Gastrocnemius medialis (tissue), 4 donors: ENCODE measurements at regions of chr3 and their contacts with region 1.

Region 1: DNA sequence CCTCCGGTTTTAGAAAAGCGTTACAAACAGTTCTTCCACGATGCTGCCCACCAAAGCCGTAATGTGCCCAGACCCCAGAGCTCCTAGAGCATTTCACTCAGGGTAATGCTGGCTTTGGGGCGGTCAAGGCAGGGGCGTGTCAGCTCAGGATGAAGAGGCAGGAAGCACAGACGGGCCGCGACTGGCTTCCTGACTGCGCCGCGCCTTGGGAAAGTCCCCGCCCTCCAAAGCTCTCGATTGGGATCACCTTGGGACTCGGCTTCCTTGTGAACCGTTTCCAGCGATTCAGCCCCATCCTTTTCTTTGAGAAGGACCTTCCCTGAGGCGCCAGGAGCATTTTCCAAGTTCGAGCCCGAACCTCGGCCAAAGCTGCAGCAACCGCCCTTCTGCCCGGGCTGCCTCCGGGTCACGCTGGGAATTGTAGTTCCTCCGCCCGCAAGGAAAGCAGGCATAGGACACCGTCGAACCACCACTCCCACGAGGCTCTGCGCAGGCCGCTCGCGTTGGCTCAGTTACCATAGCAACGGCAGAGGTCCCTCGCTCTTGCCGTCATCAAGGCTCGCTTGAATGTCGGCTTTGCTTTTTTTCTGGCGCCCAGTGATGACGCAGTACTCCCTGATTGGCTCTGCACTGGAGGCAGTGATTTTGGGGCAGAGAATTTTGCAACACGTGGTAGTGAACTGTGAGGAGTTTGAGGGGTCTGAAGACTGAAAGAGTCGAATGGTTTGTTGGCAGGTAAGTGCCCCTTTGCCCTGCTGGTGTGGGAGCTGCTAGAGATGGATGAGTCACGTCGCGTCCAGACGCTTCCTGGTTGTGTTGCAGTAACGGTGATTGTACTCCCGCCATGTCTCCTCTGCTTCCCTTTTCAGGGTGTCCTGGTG is at the starts of genes CCDC191 and QTRT2:
- DNase-seq: peak; percentile 99
- ATAC-seq: peak; percentile 97 to 98
- H3K4me3 ChIP-seq: peak within 1 kb of the TSS; percentile 76 to 87 (median 82)
- H3K27ac ChIP-seq: peak within 1 kb of the TSS; percentile 79 to 83 (median 82)
- H3K4me1 ChIP-seq: peaks cover 10 to 19% of the 10 kb centered on the region in 2 donors
- H3K27me3 ChIP-seq: no peaks in the 10 kb centered on the region
- CTCF ChIP-seq: no peak
- POLR2A ChIP-seq: no peak
- total RNA-seq, gene CCDC191: 0.29 to 0.82 (median 0.42) TPM
- total RNA-seq, gene QTRT2: 3.3 to 7.1 (median 6.9) TPM

Region 2: GRCh38 chr3:112561731-112562688 is 1494.4 kb before region 1 on chr3 and contains the starts of genes ATG3 and SLC35A5:
- in situ Hi-C with region 1: loop called in 1 of 4 experiments (anchors 25 kb)
- intact Hi-C with region 1: no loop called
- DNase-seq: peak; percentile 96 to 98
- ATAC-seq: peak; percentile 95
- H3K4me3 ChIP-seq: peak within 1 kb of the TSS; percentile 71 to 93 (median 88)
- H3K27ac ChIP-seq: peak within 1 kb of the TSS; percentile 92 to 97 (median 94)
- H3K4me1 ChIP-seq: peaks cover 25 to 36% of the 10 kb centered on the region in 2 donors
- H3K27me3 ChIP-seq: no peaks in the 10 kb centered on the region
- CTCF ChIP-seq: peak in 3 of 5 experiments; percentile 18 to 38 (median 35)
- POLR2A ChIP-seq: peak; percentile 69 to 79
- total RNA-seq, gene ATG3: 34.2 to 61.9 (median 50.7) TPM
- total RNA-seq, gene SLC35A5: 5.0 to 15.3 (median 9.5) TPM

Region 3: GRCh38 chr3:113696658-113697499 is 359.5 kb before region 1 on chr3:
- in situ Hi-C with region 1: no loop called
- intact Hi-C with region 1: loop called (anchors 2 kb)
- DNase-seq: peak; percentile 100
- ATAC-seq: peak; percentile 91 to 92
- H3K4me3 ChIP-seq: peak overlapping the region; percentile 76 to 91 (median 78)
- H3K27ac ChIP-seq: peak overlapping the region; percentile 95 to 99 (median 96)
- H3K4me1 ChIP-seq: peaks cover 48 to 51% of the 10 kb centered on the region in 2 donors
- H3K27me3 ChIP-seq: no peaks in the 10 kb centered on the region
- CTCF ChIP-seq: peak in 2 of 5 experiments; percentile 5 to 24
- POLR2A ChIP-seq: no peak

Region 4: DNA sequence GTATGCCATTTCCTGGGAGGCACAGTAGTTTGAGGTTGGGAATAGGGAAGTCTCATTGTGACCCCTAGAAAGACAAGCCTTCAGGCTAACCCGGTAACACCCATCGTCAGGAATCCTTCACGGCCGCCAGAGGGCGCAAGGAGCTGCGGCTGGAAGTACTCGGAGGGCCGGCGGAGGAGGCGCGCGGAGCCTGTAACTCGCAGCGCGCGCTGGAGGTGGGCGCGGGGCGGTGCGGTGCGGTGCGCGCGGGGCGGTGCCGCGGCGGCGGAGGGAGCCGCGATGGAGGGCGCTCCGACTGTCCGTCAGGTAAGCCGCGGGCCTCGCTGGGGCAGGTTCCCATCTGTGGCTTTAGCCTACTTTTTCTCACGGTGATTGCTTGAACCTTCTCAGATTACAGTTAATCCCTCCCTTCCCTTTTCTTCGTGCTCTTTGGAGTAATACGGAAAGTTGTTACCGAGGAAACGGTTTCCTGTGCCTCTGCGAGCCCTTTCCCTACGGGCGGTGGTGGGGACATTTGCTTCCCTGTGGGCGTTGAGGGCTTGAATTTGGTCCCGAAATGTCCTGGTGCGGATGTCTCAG is 217.7 kb before region 1 on chr3 and contains the start of gene GRAMD1C:
- in situ Hi-C with region 1: loop called in 1 of 4 experiments (anchors 10 kb)
- intact Hi-C with region 1: loop called (anchors 2 kb)
- DNase-seq: peak; percentile 63 to 68
- ATAC-seq: peak; percentile 82 to 90
- H3K4me3 ChIP-seq: peak within 1 kb of the TSS; percentile 28 to 65 (median 50)
- H3K27ac ChIP-seq: peak within 1 kb of the TSS in 3 of 4 donors; percentile 2 to 45 (median 18)
- H3K4me1 ChIP-seq: peaks cover 0 to 6% of the 10 kb centered on the region in 2 donors
- H3K27me3 ChIP-seq: no peaks in the 10 kb centered on the region
- CTCF ChIP-seq: peak; percentile 73 to 86 (median 82)
- POLR2A ChIP-seq: no peak
- total RNA-seq, gene GRAMD1C: 0.29 to 0.95 TPM in 2 of 4 donors, not detected in the others

Region 5: GRCh38 chr3:113947372-113948014 is 108.9 kb before region 1 on chr3 and contains the start of gene ZDHHC23:
- in situ Hi-C with region 1: no loop called
- intact Hi-C with region 1: loop called (anchors 1 kb)
- DNase-seq: peak; percentile 67 to 78
- ATAC-seq: peak; percentile 84 to 91
- H3K4me3 ChIP-seq: peak within 1 kb of the TSS; percentile 77 to 86 (median 80)
- H3K27ac ChIP-seq: peak within 1 kb of the TSS; percentile 68 to 80 (median 72)
- H3K4me1 ChIP-seq: peaks cover 0 to 2% of the 10 kb centered on the region in 2 donors
- H3K27me3 ChIP-seq: no peaks in the 10 kb centered on the region
- CTCF ChIP-seq: no peak
- POLR2A ChIP-seq: peak in 1 of 2 donors; percentile 24
- total RNA-seq, gene ZDHHC23: 0.92 to 3.5 (median 2.3) TPM